ENCODE measurements at regions of chr15 and their contacts with region 1.

Region 1: GRCh38 chr15:70488002-70488605 is 275.3 kb downstream of the UACA start:
- DNase-seq: peak; percentile 57 to 68
- H3K4me3 ChIP-seq: no peak overlapping the region
- H3K27ac ChIP-seq: 0 out of 2 replicates have a peak overlapping the region, but pooled peaks have one; percentile 91
- H3K4me1 ChIP-seq: peaks cover 53% of the 10 kb centered on the region
- H3K27me3 ChIP-seq: no peaks in the 10 kb centered on the region
- CTCF ChIP-seq: peak; percentile 95

Region 2: DNA sequence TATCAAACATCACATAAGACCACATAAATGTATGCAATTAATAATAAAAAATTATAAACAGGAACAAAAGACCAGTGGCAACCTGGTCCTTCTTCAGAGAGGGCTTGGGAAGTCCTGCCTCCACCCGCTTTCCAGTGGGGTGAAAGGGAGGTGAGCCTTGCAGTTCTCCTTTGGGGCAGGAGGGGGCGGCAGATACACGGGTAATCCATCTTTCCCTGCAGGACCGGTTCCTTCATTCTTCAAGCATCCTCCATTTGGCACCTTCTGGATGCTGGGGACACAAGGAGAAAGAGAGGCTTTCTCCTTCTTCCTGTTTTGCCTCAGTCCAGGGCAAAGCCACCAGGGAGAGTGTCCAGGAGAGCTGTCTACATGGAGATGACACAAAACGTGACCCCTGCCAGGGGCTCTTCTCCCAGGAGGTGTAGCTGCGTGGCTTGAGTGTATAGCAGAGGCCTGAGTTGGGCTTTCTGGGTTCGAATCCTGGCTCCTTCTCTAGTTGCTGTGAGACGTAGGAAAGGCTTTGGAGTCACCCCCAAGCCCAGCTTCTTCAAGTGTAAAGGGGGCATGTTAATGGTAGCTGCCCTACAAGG is 1012.2 kb before region 1 on chr15:
- CTCF ChIA-PET with region 1: no interaction called
- POLR2A ChIA-PET with region 1: no interaction called
- intact Hi-C with region 1: loop called (anchors 1 kb)
- DNase-seq: peak; percentile 67 to 82
- H3K4me3 ChIP-seq: no peak overlapping the region
- H3K27ac ChIP-seq: no peak overlapping the region
- H3K4me1 ChIP-seq: peaks cover 4% of the 10 kb centered on the region; the same call in 1 of the 2 replicates
- H3K27me3 ChIP-seq: no peaks in the 10 kb centered on the region
- CTCF ChIP-seq: peak; percentile 87

Region 3: GRCh38 chr15:70240082-70240481 is 248.0 kb before region 1 on chr15:
- CTCF ChIA-PET with region 1: no interaction called
- POLR2A ChIA-PET with region 1: no interaction called
- intact Hi-C with region 1: loop called (anchors 5 kb)
- DNase-seq: no peak
- H3K4me3 ChIP-seq: no peak overlapping the region
- H3K27ac ChIP-seq: no peak overlapping the region
- H3K4me1 ChIP-seq: peaks cover 27% of the 10 kb centered on the region
- H3K27me3 ChIP-seq: no peaks in the 10 kb centered on the region
- CTCF ChIP-seq: no peak

Region 4: DNA sequence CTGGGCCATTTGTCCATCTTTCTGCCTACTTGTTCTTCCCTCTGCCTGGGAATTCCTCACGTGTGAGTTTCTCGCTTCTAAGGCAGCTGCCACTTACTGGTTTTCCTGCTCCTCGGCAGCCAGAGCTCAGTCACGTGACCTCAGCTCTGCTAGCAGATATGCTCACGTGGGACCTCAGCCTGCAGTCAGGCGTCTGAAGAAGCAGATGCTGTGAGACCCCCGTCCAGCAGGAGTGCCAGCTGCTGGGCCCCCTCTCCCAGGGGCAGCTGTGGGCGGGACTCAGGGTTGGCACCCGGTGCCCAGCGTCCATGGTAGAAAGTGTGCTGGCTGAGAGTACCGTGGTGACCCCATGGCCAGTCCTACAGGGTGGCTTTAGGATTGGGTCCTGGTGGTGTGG is 229.1 kb before region 1 on chr15:
- CTCF ChIA-PET with region 1: no interaction called
- POLR2A ChIA-PET with region 1: no interaction called
- intact Hi-C with region 1: no loop called
- DNase-seq: no peak
- H3K4me3 ChIP-seq: no peak overlapping the region
- H3K27ac ChIP-seq: no peak overlapping the region
- H3K4me1 ChIP-seq: no peaks in the 10 kb centered on the region
- H3K27me3 ChIP-seq: no peaks in the 10 kb centered on the region
- CTCF ChIP-seq: no peak

Region 5: GRCh38 chr15:70327856-70328678 is 160.0 kb before region 1 on chr15:
- CTCF ChIA-PET with region 1: no interaction called
- POLR2A ChIA-PET with region 1: no interaction called
- intact Hi-C with region 1: loop called (anchors 5 kb)
- DNase-seq: peak in 1 of 2 experiments; percentile 49
- H3K4me3 ChIP-seq: no peak overlapping the region
- H3K27ac ChIP-seq: no peak overlapping the region
- H3K4me1 ChIP-seq: peaks cover 31% of the 10 kb centered on the region
- H3K27me3 ChIP-seq: no peaks in the 10 kb centered on the region
- CTCF ChIP-seq: no peak

Region 6: GRCh38 chr15:70426105-70426821 is 61.8 kb before region 1 on chr15:
- CTCF ChIA-PET with region 1: no interaction called
- POLR2A ChIA-PET with region 1: no interaction called
- intact Hi-C with region 1: no loop called
- DNase-seq: peak in 1 of 2 experiments; percentile 54
- H3K4me3 ChIP-seq: no peak overlapping the region
- H3K27ac ChIP-seq: peak overlapping the region; percentile 68
- H3K4me1 ChIP-seq: peaks cover 52% of the 10 kb centered on the region
- H3K27me3 ChIP-seq: no peaks in the 10 kb centered on the region
- CTCF ChIP-seq: no peak

Region 7: DNA sequence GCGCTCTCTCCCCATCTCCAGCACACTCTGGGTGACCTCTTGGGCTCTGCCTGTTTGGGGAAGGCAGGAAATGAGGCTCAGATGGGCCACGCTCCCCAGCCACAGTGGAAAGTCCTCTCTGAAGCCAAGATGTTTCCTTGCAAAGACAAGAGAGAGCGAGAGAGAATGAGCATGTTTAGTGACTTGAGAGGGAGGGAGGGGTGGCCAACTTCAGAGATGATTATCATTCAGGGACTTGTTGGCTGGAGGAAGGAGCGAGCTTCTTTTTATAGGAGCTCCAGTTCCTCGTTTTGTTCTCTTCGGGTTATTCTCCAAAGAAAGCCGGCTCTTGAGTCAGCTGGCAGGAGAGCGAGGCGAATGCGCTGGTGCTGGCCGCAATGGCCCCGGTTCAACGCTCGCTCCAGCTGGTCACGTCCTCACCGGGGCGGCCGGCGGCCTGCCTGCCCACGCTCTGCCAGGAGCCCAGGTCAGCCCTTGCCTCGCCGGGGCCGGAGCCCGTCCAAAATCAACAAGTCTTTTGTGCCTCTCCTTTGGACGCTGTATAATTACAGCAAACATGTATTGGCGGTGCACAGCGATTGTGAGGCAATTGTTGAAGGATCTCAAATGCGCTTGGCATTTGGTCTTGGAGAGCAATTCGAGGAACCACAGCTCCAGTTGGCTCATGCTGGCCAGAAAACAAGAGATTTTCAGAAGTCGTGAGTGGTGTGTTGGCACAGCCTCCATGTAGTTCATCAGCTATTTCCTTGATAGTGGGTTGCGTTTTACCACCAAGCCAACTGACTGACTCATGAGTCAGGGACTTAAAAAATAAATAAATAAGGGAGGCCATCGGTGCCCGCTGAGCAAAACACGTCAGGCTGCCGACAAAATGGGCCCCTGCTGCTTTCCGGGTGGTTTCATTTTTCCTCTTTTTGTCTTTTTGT is 13.4 kb before region 1 on chr15:
- CTCF ChIA-PET with region 1: no interaction called
- POLR2A ChIA-PET with region 1: no interaction called
- intact Hi-C with region 1: loop called (anchors 1 kb)
- DNase-seq: peak; percentile 74 to 97
- H3K4me3 ChIP-seq: peak overlapping the region; percentile 40; the same call in 1 of the 2 replicates
- H3K27ac ChIP-seq: peak overlapping the region; percentile 95
- H3K4me1 ChIP-seq: peaks cover 62% of the 10 kb centered on the region
- H3K27me3 ChIP-seq: no peaks in the 10 kb centered on the region
- CTCF ChIP-seq: no peak

Region 8: GRCh38 chr15:70650567-70651302 is 162.6 kb after region 1 on chr15:
- CTCF ChIA-PET with region 1: no interaction called
- POLR2A ChIA-PET with region 1: no interaction called
- intact Hi-C with region 1: no loop called
- DNase-seq: no peak
- H3K4me3 ChIP-seq: no peak overlapping the region
- H3K27ac ChIP-seq: no peak overlapping the region
- H3K4me1 ChIP-seq: no peaks in the 10 kb centered on the region
- H3K27me3 ChIP-seq: no peaks in the 10 kb centered on the region
- CTCF ChIP-seq: no peak